Astrocyte of the cerebellum (primary cell): ENCODE measurements at regions of chr11 and their contacts with region 1.

Region 1: DNA sequence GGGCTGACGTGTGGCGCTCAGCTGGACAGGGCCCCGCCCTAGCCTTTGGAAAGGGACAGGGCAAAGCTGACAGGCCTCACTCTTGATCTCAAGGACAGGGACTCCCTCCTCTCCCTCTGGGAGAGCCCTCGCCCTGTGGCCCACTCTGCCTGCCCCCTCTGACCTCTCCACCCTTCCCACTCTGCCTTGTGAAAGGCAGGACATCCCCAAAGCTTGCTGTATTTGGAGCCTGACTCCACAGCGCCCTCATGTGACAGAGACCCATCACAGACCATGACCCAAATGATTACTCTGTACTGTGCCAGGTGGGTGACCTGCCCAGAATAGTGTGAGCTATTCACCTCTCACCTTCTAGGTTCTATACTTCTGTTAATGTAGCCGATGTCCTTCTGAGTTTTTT is 18.8 kb downstream of the P2RY2 start:
- DNase-seq: no peak
- H3K4me3 ChIP-seq: no peak overlapping the region
- CTCF ChIP-seq: peak; percentile 43

Region 2: GRCh38 chr11:73335204-73335923 is 98.5 kb after region 1 on chr11:
- in situ Hi-C with region 1: loop called (anchors 5 kb)
- DNase-seq: peak; percentile 73
- H3K4me3 ChIP-seq: no peak overlapping the region
- CTCF ChIP-seq: peak; percentile 99